ENCODE measurements at regions of chr9 and their contacts with region 1.

Region 1: GRCh38 chr9:137757613-137758029 is 120.0 kb upstream of the CACNA1B start:
- DNase-seq: peak; percentile 60
- CTCF ChIP-seq: no peak

Region 2: GRCh38 chr9:137605121-137606004 is 152.3 kb before region 1 on chr9 and contains the start of gene ARRDC1:
- in situ Hi-C with region 1: no loop called
- DNase-seq: peak; percentile 100
- CTCF ChIP-seq: no peak

Region 3: GRCh38 chr9:137679249-137679648 is 78.4 kb before region 1 on chr9:
- in situ Hi-C with region 1: loop called (anchors 5 kb)
- DNase-seq: no peak
- CTCF ChIP-seq: peak; percentile 15

Measured in GM13977 (cell line).